OCI-LY7 (cell line): ENCODE measurements at regions of chr3 and their contacts with region 1.

Region 1: GRCh38 chr3:14402304-14402811 is at the start of gene SLC6A6:
- DNase-seq: peak; percentile 99
- H3K4me3 ChIP-seq: peak within 1 kb of the TSS; percentile 96
- H3K27ac ChIP-seq: peak within 1 kb of the TSS; percentile 91
- H3K4me1 ChIP-seq: peaks cover 75% of the 10 kb centered on the region
- CTCF ChIP-seq: peak; percentile 62
- total RNA-seq, gene SLC6A6: 36.7 and 43.0 TPM in 2 replicates

Region 2: DNA sequence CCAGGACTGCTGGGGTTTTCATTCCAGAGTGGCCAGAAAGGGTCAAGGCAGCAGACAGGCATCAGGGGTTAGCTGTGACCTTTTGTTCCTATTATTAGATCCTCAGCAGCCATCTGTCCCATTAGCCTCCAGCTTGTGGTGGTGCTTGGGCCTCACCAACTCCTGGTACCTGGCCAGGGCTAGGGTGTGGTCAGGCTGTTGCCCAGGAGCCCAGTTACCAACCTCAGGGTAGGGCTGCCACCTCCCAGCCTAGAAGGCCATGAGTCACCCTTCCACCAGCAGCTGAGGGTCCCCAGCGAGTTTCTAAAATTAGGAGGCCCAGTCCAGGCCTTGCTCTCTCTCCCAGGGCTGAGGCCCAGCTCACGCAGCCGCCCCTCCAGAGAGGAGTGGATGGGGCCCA is 265.4 kb before region 1 on chr3:
- CTCF ChIA-PET with region 1: no interaction called
- POLR2A ChIA-PET with region 1: no interaction called
- intact Hi-C with region 1: no loop called
- DNase-seq: no peak
- H3K4me3 ChIP-seq: no peak overlapping the region
- H3K27ac ChIP-seq: no peak overlapping the region
- H3K4me1 ChIP-seq: no peaks in the 10 kb centered on the region
- CTCF ChIP-seq: no peak

Region 3: GRCh38 chr3:14274999-14275961 is 127.1 kb before region 1 on chr3:
- CTCF ChIA-PET with region 1: interaction called, 3 read pairs
- POLR2A ChIA-PET with region 1: no interaction called
- intact Hi-C with region 1: loop called (anchors 5 kb)
- DNase-seq: peak; percentile 69
- H3K4me3 ChIP-seq: no peak overlapping the region
- H3K27ac ChIP-seq: no peak overlapping the region
- H3K4me1 ChIP-seq: peaks cover 16% of the 10 kb centered on the region
- CTCF ChIP-seq: peak; percentile 80

Region 4: GRCh38 chr3:14391033-14391432 is 11.3 kb before region 1 on chr3:
- CTCF ChIA-PET with region 1: interaction called, 4 read pairs
- POLR2A ChIA-PET with region 1: interaction called, 9 read pairs
- intact Hi-C with region 1: loop called (anchors 1 kb)
- DNase-seq: no peak
- H3K4me3 ChIP-seq: no peak overlapping the region
- H3K27ac ChIP-seq: peak overlapping the region; percentile 97
- H3K4me1 ChIP-seq: peaks cover 81% of the 10 kb centered on the region
- CTCF ChIP-seq: no peak

Region 5: GRCh38 chr3:14431892-14432834 is 29.8 kb after region 1 on chr3:
- CTCF ChIA-PET with region 1: interaction called, 20 read pairs
- POLR2A ChIA-PET with region 1: interaction called, 32 read pairs
- intact Hi-C with region 1: loop called (anchors 1 kb)
- DNase-seq: peak; percentile 91
- H3K4me3 ChIP-seq: peak overlapping the region; percentile 57
- H3K27ac ChIP-seq: peak overlapping the region; percentile 90
- H3K4me1 ChIP-seq: peaks cover 71% of the 10 kb centered on the region
- CTCF ChIP-seq: no peak

Region 6: GRCh38 chr3:14467814-14468620 is 65.7 kb after region 1 on chr3:
- CTCF ChIA-PET with region 1: no interaction called
- POLR2A ChIA-PET with region 1: no interaction called
- intact Hi-C with region 1: loop called (anchors 2 kb)
- DNase-seq: peak; percentile 53
- H3K4me3 ChIP-seq: no peak overlapping the region
- H3K27ac ChIP-seq: no peak overlapping the region
- H3K4me1 ChIP-seq: no peaks in the 10 kb centered on the region
- CTCF ChIP-seq: peak; percentile 92